ENCODE measurements at regions of chr1 and their contacts with region 1.

Region 1: DNA sequence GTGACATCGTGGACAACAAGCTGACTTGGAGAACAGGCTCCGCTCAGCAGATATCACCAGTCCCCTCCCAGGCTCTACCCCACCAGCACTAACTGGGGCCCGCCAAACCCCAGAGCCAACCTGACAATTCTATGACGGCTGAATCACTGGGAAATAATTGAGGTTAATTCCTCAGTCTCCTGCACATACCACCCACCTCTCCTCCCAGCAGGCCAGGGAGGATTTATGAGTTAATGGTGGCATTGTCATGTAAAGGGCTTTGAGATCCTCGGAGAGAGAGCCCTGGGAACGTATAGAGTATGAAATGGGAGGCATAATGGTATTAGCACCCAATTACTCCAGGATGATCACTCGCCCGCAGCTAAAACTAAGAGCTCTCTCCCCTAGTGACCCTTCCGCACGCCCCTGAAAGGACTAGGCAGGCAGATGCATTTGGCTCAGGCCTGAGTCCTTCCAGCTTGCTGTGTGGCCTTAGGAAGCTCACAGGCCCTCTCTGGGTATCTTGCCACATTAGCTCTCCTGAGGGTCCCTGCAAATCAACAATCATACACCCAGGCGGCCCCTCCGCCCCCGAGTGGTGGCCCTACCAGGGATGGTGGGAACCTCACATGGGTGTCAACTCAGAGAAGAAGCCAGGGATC is 27.3 kb upstream of the PAX7 start:
- DNase-seq: peak; percentile 77
- H3K4me3 ChIP-seq: no peak overlapping the region
- H3K27ac ChIP-seq: no peak overlapping the region
- H3K4me1 ChIP-seq: peaks cover 39% of the 10 kb centered on the region
- H3K27me3 ChIP-seq: no peaks in the 10 kb centered on the region
- CTCF ChIP-seq: no peak

Region 2: GRCh38 chr1:17414022-17414421 is 1189.3 kb before region 1 on chr1:
- CTCF ChIA-PET with region 1: no interaction called
- POLR2A ChIA-PET with region 1: interaction called, 12 read pairs
- intact Hi-C with region 1: no loop called
- DNase-seq: no peak
- H3K4me3 ChIP-seq: no peak overlapping the region
- H3K27ac ChIP-seq: no peak overlapping the region
- H3K4me1 ChIP-seq: no peaks in the 10 kb centered on the region
- H3K27me3 ChIP-seq: no peaks in the 10 kb centered on the region
- CTCF ChIP-seq: no peak